Panc1 (cell line): ENCODE measurements at regions of chr13 and their contacts with region 1.

Region 1: GRCh38 chr13:40933508-40934204 is 85.5 kb downstream of the ELF1 start:
- DNase-seq: no peak
- ATAC-seq: no peak
- H3K4me3 ChIP-seq: no peak overlapping the region
- H3K27ac ChIP-seq: no peak overlapping the region
- H3K4me1 ChIP-seq: no peaks in the 10 kb centered on the region
- H3K27me3 ChIP-seq: no peaks in the 10 kb centered on the region
- CTCF ChIP-seq: no peak

Region 2: DNA sequence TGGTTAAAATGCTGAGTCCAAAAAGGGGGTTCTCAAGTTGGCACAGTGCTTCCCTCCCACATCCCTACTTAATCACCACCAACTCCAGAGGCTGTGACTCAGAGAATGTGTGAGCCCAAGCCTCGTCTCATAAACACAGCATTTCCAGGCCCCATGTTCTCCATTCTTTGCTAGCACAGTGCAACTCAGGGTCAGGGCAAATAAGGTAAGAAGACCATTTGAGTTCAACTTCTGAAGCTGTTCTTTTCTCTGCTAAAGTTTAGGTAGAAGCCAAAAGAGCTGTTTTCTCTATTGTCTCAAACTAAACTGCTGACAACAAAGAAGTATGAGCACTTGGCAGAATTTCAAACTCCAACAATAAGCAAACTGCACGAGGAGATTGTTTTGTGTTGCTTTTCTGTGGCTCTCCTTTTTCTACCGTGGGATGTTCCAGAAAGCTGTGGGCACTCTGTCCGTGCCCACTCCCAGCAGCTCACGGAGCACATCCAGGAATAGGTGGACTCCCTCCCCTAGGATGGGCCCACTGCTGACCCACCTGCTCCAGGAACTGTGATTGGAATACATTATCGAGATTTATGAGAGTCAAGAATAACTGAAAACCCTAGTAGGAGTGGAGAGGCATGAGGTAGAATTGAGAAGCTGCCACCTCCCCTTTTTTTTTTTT is 783.9 kb before region 1 on chr13:
- CTCF ChIA-PET with region 1: no interaction called
- POLR2A ChIA-PET with region 1: no interaction called
- in situ Hi-C with region 1: no loop called
- intact Hi-C with region 1: no loop called
- DNase-seq: no peak
- ATAC-seq: no peak
- H3K4me3 ChIP-seq: no peak overlapping the region
- H3K27ac ChIP-seq: no peak overlapping the region
- H3K4me1 ChIP-seq: no peaks in the 10 kb centered on the region
- H3K27me3 ChIP-seq: no peaks in the 10 kb centered on the region
- CTCF ChIP-seq: no peak

Region 3: DNA sequence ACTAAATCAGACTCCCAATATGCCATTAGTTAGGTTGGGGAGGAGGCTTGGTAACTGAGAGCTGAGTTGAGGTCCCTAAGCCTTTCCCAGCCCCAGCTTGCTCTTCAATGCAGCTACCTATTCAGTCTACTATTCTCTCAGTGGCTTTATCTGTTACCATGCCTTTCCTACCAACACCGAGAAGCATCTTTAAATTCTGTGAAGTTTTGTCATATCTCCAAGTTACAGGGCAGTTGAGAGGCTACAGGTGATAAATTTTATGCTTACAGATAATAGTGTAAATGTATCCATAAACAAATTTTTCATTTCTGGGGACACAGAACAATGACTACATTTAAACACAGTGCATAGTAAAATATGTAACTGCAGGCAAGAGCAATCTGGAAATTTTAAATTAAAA is 25.1 kb before region 1 on chr13:
- CTCF ChIA-PET with region 1: no interaction called
- POLR2A ChIA-PET with region 1: interaction called, 11 read pairs
- in situ Hi-C with region 1: no loop called
- intact Hi-C with region 1: no loop called
- DNase-seq: no peak
- ATAC-seq: no peak
- H3K4me3 ChIP-seq: no peak overlapping the region
- H3K27ac ChIP-seq: no peak overlapping the region
- H3K4me1 ChIP-seq: no peaks in the 10 kb centered on the region
- H3K27me3 ChIP-seq: no peaks in the 10 kb centered on the region
- CTCF ChIP-seq: no peak

Region 4: DNA sequence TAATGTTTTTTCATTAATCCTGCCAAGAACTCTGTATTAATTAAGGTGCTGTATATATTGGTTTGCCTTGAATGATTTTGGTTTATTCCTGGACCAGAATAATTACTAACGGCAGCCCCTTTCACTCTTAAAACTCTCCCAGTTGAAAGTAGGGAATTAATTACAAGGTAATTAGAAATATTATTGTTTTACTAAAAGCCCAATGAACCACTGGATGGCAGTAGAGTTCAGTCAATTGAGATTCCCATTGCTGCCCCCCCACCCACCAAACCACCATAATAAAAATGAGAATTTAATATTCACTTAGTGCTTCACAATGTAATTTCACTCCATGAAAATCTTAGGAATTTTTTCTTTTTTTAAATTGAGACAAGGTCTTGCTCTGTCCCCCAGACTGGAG is 141.4 kb after region 1 on chr13:
- CTCF ChIA-PET with region 1: no interaction called
- POLR2A ChIA-PET with region 1: no interaction called
- in situ Hi-C with region 1: no loop called
- intact Hi-C with region 1: no loop called
- DNase-seq: no peak
- ATAC-seq: no peak
- H3K4me3 ChIP-seq: no peak overlapping the region
- H3K27ac ChIP-seq: no peak overlapping the region
- H3K4me1 ChIP-seq: no peaks in the 10 kb centered on the region
- H3K27me3 ChIP-seq: no peaks in the 10 kb centered on the region
- CTCF ChIP-seq: peak; percentile 52; the same call in 1 of the 2 replicates